SK-N-SH (cell line): ENCODE measurements at regions of chr7 and their contacts with region 1.

Region 1: GRCh38 chr7:70133961-70134770 is 535.9 kb downstream of the AUTS2 start:
- DNase-seq: peak; percentile 60
- H3K4me3 ChIP-seq: no peak overlapping the region
- H3K27ac ChIP-seq: peak overlapping the region in 1 of 2 experiments; percentile 80; a peak in 2 of 4 replicates
- H3K4me1 ChIP-seq: peaks cover 0 to 46% of the 10 kb centered on the region in 2 experiments; a peak in 2 of 4 replicates
- H3K27me3 ChIP-seq: no peaks in the 10 kb centered on the region
- CTCF ChIP-seq: no peak
- EP300 ChIP-seq: peak; percentile 24 to 97; a peak in 3 of 4 replicates
- RAD21 ChIP-seq: peak; percentile 49

Region 2: GRCh38 chr7:69859342-69859741 is 274.8 kb before region 1 on chr7:
- CTCF ChIA-PET with region 1: no interaction called
- POLR2A ChIA-PET with region 1: no interaction called
- DNase-seq: no peak
- H3K4me3 ChIP-seq: no peak overlapping the region
- H3K27ac ChIP-seq: no peak overlapping the region
- H3K4me1 ChIP-seq: peaks cover 26 to 39% of the 10 kb centered on the region in 2 experiments; a peak in 3 of 4 replicates
- H3K27me3 ChIP-seq: no peaks in the 10 kb centered on the region
- CTCF ChIP-seq: no peak
- EP300 ChIP-seq: no peak
- RAD21 ChIP-seq: no peak

Region 3: GRCh38 chr7:70113536-70113935 is 20.6 kb before region 1 on chr7:
- CTCF ChIA-PET with region 1: interaction called, 15 read pairs
- POLR2A ChIA-PET with region 1: interaction called, 3 read pairs
- DNase-seq: peak; percentile 54
- H3K4me3 ChIP-seq: no peak overlapping the region
- H3K27ac ChIP-seq: peak overlapping the region in 1 of 2 experiments; percentile 34; a peak in 1 of 4 replicates
- H3K4me1 ChIP-seq: peaks cover 0 to 8% of the 10 kb centered on the region in 2 experiments; a peak in 2 of 4 replicates
- H3K27me3 ChIP-seq: no peaks in the 10 kb centered on the region
- CTCF ChIP-seq: no peak
- EP300 ChIP-seq: peak; percentile 31 to 47; a peak in 2 of 4 replicates
- RAD21 ChIP-seq: no peak; the same call in 1 of the 2 replicates

Region 4: DNA sequence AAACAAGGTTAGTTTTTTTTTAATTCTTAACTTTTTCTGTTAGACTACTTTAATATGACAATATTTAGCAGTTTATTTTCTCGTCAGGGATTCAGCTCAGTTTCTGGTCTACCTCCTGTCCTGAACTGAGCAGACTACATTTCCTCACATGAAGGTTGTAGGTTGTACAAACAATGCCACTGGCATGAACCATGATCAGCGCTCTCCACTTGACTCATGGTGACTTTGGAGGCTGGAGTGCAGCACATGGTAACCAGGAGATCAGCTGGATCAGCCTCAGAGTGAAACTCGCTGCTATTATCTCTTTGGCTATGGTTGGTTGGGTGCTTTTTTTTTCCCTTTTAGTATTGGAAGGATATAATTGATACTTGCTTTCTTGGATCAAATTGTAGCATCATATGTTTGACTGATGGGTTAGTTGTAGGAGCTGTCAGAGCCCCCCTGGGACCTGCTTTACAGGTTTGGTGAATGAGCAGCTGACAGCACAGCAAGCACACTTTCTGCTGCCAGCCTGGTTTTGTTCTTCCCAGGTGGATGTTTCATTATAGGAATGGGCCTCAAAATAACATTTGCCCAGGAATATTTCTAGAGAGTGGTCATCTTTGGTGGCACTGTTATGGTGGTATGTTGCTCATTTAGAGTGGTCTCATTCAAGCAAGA is 20.5 kb after region 1 on chr7:
- CTCF ChIA-PET with region 1: interaction called, 31 read pairs
- POLR2A ChIA-PET with region 1: no interaction called
- DNase-seq: no peak
- H3K4me3 ChIP-seq: no peak overlapping the region
- H3K27ac ChIP-seq: no peak overlapping the region
- H3K4me1 ChIP-seq: no peaks in the 10 kb centered on the region; a peak in 1 of 4 replicates
- H3K27me3 ChIP-seq: no peaks in the 10 kb centered on the region
- CTCF ChIP-seq: no peak
- EP300 ChIP-seq: no peak
- RAD21 ChIP-seq: no peak